ENCODE measurements at regions of chr10 and their contacts with region 1.

Region 1: DNA sequence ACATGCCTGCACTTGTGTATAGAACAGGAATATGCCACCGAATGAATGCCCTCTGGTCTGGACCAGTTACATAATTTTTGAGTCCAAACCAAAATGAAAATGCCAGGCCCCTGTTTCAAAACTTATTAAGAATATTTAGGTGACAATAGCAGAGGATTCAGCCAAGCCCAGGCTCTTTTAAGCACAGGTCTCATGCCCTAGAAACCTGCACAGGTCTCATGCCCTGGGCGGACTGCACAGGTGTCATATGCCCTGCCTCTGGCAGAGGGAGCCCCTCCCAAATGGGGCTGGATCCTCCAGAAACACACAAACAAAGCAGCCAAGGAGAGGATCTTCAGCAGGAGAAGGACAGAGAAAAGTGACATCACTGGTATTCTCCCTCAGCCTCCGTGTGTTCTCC is 605.4 kb upstream of the NRP1 start:
- DNase-seq: no peak
- H3K4me3 ChIP-seq: no peak overlapping the region
- H3K27ac ChIP-seq: no peak overlapping the region
- H3K4me1 ChIP-seq: no peaks in the 10 kb centered on the region
- H3K27me3 ChIP-seq: no peaks in the 10 kb centered on the region
- CTCF ChIP-seq: no peak

Region 2: DNA sequence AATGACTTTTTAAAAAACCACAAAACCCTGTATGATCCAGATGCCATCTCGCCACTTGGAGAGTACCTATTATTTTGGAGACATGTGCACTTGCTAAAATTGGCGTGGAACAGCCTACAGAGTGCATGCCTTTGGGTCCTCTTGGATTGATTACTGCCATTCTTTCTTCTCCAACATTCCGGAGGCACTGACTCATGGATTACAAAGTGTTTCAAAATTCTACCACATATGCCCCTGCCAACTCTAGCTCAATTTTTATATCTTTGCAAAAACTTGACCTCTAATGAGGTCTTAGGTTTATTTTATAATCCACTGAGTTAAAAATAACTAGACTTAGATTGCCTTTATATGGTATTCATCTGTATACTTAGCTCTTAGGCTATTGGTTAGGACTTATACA is 1827.8 kb before region 1 on chr10:
- intact Hi-C with region 1: loop called (anchors 5 kb)
- DNase-seq: no peak
- H3K4me3 ChIP-seq: no peak overlapping the region
- H3K27ac ChIP-seq: peak overlapping the region in 1 of 2 donors; percentile 58
- H3K4me1 ChIP-seq: peaks cover 0 to 25% (median 8%) of the 10 kb centered on the region in 4 donors
- H3K27me3 ChIP-seq: no peaks in the 10 kb centered on the region
- CTCF ChIP-seq: no peak

Region 3: GRCh38 chr10:33861016-33861704 is 78.7 kb before region 1 on chr10:
- intact Hi-C with region 1: no loop called
- DNase-seq: no peak
- H3K4me3 ChIP-seq: no peak overlapping the region
- H3K27ac ChIP-seq: no peak overlapping the region
- H3K4me1 ChIP-seq: no peaks in the 10 kb centered on the region
- H3K27me3 ChIP-seq: no peaks in the 10 kb centered on the region
- CTCF ChIP-seq: no peak

Region 4: DNA sequence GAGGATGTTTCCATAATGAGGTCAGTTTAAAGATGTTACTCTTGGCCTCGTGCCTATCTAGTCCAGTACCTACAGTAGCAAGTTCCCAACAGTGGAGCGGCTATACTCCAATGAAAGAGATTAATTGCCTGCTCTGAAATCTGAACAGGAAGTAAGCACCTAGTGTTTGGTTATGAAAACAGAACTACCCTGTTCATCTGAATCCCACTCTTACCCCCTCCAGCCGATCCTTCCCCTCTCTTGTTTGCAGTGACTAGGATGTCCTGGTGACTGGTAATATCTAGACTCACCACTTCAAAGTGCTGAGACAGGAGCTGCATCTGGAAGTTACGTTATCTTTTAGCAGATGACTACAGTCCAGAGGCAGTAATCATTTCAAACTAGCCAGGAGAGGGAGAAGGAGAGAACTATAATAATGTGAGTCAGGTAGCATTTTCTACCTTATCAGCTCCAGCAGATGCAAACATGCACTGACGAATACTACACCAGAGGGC is 61.2 kb after region 1 on chr10:
- intact Hi-C with region 1: no loop called
- DNase-seq: no peak
- H3K4me3 ChIP-seq: no peak overlapping the region
- H3K27ac ChIP-seq: no peak overlapping the region
- H3K4me1 ChIP-seq: no peaks in the 10 kb centered on the region
- H3K27me3 ChIP-seq: no peaks in the 10 kb centered on the region
- CTCF ChIP-seq: no peak

Measured in tibial artery (tissue), 4 donors.